AG04450 (cell line): ENCODE measurements at regions of chr17 and their contacts with region 1.

Region 1: DNA sequence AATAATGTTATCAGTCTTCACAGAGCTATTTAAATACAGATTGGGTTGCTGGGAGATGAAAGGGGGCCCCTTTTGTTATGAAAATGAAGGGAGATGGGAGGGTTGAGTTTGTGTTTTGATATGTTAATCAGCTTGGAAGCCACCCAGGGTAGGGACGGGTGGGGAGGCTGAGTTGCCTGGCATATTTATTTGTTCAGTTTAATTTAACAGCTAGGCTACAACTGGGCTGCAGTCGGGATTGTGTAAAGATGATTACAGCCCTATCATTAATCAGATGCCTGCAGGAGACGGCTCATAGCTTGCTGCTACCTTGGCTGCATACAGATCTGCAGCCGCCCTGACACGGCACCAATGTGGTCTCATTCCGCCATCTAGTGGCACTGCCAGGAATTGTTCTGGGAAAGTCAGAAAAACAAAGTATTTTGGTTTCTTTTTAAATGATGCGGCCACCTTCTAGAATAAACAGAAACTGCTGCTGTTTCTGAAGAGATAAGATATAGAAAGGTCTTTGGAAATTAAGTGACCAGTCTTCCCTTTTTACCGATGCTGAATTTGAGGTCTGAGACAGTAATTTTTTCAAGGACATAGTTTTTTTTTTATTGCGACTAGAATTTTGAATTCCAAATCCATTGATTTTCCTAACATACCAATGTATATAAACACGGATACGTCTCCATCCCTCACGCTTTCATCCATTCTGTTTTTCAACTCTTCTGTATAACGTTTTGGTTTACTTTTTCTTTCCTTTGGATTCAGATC is 458.0 kb upstream of the ASIC2 start:
- DNase-seq: peak; percentile 26
- H3K4me3 ChIP-seq: peak overlapping the region; percentile 31; the same call in 1 of the 2 replicates
- H3K27ac ChIP-seq: no peak overlapping the region
- H3K27me3 ChIP-seq: no peaks in the 10 kb centered on the region
- CTCF ChIP-seq: peak; percentile 86

Region 2: DNA sequence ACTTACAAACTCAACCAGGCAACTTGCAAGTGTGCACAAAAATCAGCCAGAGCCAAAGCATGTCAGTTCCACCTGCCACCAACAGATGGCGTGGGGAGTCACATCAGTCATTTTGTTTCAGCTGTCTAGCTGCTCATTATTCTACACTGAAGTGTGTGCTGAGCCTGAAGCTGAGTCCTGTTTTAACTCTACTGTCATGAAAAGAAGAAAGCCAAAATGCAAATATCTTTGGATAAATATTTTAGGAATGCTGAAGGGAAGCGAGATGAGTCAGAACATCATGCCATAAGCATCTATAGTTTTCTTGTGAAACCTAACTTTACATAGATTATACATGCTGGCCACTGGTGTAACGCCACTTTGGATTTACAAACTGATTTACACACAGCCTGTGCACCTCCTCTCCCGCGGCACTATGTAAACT is 1091.7 kb before region 1 on chr17:
- CTCF ChIA-PET with region 1: interaction called, 16 read pairs
- POLR2A ChIA-PET with region 1: no interaction called
- DNase-seq: no peak
- H3K4me3 ChIP-seq: no peak overlapping the region
- H3K27ac ChIP-seq: no peak overlapping the region
- H3K27me3 ChIP-seq: no peaks in the 10 kb centered on the region
- CTCF ChIP-seq: peak; percentile 96

Region 3: DNA sequence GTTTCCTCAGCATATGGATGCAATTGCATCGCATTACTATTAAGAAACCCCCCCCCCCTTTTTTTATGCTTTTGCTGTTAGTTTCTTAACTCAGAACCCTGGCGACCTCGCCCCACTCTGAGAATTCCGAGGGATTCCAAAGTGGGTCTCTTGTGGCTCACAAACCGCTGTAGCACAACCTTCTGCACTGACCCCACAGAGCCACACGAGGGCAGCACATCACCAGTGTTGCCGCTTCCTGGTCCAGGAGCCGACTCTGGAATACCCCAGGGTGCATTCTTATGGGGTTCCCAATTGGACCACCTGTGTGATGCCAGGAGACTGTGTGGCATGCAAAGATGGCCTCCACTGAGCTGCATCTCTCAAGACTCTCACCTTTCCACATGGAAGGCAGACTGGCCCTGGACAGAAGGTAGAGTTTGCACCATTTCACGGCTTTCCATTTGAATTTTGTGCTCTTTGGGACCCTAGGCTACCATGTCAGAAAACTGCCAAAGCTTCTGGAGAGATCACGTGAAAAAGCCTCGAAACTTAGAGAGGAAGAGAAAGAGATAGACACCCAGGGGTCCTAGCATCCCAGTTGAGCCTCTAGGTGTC is 25.3 kb before region 1 on chr17:
- CTCF ChIA-PET with region 1: interaction called, 11 read pairs
- POLR2A ChIA-PET with region 1: no interaction called
- DNase-seq: no peak
- H3K4me3 ChIP-seq: no peak overlapping the region
- H3K27ac ChIP-seq: no peak overlapping the region
- H3K27me3 ChIP-seq: no peaks in the 10 kb centered on the region
- CTCF ChIP-seq: peak; percentile 62

Region 4: DNA sequence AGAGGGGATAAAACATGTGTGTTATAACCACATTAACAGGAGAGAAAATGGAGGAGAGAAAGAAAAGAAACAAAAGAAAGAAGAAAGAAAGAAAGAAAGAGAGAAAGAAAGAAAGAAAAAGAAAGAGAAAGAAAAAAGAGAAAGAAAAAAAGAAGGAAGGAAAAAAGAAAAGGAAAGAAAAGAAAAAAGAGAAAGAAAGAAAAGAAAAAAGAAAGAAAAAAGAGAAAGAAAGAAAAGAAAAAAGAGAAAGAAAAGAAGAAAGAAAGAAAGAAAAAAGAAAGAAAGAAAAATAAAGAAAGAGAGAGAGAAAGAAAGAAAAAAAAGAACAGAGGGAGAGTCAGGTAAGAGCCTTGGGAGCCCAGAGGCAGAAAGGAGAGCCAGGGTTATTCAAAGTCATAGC is 11.4 kb before region 1 on chr17:
- CTCF ChIA-PET with region 1: no interaction called
- POLR2A ChIA-PET with region 1: no interaction called
- DNase-seq: no peak
- H3K4me3 ChIP-seq: no peak overlapping the region
- H3K27ac ChIP-seq: no peak overlapping the region
- H3K27me3 ChIP-seq: no peaks in the 10 kb centered on the region
- CTCF ChIP-seq: no peak

Region 5: DNA sequence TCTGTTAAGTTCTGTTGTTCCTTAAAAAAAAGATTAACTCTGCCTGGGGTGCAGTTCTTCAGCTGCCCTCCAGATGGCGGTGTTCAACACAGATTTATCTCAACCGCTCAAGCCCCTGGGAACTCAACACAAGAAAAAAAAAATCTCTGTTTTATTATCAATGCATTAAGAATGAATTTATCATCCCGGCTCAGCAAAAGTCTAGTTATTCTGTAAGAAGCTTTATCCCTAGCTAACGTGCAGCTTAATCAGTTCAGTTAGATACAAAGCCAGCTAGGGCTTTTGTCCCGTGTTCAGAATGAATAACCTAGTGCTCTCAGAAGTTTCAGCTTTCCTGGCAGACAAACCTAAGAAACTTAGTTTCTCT is 28.1 kb after region 1 on chr17:
- CTCF ChIA-PET with region 1: interaction called, 11 read pairs
- POLR2A ChIA-PET with region 1: no interaction called
- DNase-seq: peak; percentile 45
- H3K4me3 ChIP-seq: no peak overlapping the region
- H3K27ac ChIP-seq: no peak overlapping the region
- H3K27me3 ChIP-seq: no peaks in the 10 kb centered on the region
- CTCF ChIP-seq: peak; percentile 92